Vagina (tissue), 2 donors: ENCODE measurements at regions of chr13 and their contacts with region 1.

Region 1: DNA sequence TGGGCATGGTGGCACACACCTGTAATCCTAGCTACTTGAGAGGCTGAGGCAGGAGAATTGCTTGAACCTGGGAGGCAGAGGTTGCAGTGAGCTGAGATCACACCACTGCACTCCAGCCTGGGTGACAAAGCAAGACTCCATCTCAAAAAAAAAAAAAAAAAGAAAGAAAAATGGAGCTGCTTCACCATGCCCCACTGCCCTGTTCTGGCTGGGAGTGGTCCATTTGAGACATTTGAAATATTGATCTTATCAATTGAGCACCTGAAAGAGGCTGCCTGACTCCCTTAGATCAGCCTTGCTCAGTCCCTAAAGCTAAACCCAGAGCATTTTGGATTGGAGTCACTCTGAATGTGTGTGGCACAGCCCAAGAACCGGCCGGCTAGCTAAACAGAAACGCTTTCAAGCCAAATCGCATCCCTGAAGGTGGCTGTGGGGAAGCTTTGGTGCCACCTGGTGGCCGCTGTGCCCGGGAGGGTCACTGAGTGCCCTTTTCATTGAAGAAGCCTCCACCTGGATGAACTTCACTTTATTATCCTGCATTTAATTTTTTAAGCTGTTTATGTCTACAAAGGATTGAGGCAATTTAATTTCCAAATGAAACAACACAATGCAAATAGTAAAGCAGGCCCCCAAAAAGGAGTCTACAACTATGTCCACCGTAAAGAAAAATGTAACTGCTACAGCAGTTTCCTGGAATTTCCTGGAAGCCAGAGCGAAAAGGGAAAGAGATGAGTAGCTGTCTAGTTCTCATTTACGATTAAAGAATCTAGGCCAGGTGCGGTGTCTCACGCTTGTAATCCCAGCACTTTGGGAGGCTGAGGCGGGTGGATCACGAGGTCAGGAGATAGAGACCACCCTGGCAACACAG is 53.1 kb upstream of the SERPINE3 start:
- DNase-seq: no peak
- H3K4me3 ChIP-seq: no peak overlapping the region
- H3K27ac ChIP-seq: no peak overlapping the region
- H3K4me1 ChIP-seq: no peaks in the 10 kb centered on the region
- H3K27me3 ChIP-seq: no peaks in the 10 kb centered on the region
- CTCF ChIP-seq: peak; percentile 50 to 77 (median 70)
- POLR2A ChIP-seq: no peak

Region 2: DNA sequence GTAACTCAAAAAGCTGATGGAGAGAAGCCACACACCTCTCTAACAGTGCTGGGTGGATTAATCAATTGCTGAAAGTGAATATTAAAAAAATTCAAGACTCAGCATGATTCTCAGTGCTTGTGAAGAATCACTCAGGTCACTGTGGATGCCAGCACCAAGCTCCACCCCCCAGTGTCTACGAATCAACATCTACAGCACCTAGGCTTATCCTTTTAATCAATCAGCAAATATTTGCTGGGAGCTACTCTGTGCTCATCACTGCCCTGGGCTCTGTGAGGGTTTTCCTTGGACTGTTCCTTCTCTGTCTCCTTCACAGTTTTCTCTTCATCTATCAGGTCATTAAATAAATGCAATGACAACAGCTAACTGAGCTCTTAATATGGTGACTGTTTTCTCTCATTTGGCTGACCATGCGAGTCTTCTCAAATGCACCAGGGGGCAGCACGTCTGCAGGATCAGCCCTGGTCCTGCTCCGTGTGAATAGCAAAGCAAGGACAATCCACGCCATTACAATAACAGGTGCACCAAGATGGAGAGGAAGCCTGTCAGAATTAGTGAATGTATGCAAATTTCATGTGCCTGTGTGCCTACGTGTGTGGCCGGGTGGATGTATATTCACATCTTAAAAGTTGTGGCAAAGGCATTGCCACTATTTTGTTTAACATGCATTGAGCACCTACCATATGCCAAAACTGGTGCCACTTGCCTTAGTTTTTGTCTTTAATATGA is 160.7 kb before region 1 on chr13:
- intact Hi-C with region 1: loop called (anchors 10 kb)
- DNase-seq: no peak
- H3K4me3 ChIP-seq: no peak overlapping the region
- H3K27ac ChIP-seq: no peak overlapping the region
- H3K4me1 ChIP-seq: no peaks in the 10 kb centered on the region
- H3K27me3 ChIP-seq: no peaks in the 10 kb centered on the region
- CTCF ChIP-seq: peak in 2 of 3 experiments; percentile 28 to 50
- POLR2A ChIP-seq: no peak

Region 3: GRCh38 chr13:51154029-51154555 is 132.3 kb before region 1 on chr13:
- intact Hi-C with region 1: loop called (anchors 5 kb)
- DNase-seq: no peak
- H3K4me3 ChIP-seq: no peak overlapping the region
- H3K27ac ChIP-seq: no peak overlapping the region
- H3K4me1 ChIP-seq: no peaks in the 10 kb centered on the region
- H3K27me3 ChIP-seq: no peaks in the 10 kb centered on the region
- CTCF ChIP-seq: no peak
- POLR2A ChIP-seq: no peak

Region 4: DNA sequence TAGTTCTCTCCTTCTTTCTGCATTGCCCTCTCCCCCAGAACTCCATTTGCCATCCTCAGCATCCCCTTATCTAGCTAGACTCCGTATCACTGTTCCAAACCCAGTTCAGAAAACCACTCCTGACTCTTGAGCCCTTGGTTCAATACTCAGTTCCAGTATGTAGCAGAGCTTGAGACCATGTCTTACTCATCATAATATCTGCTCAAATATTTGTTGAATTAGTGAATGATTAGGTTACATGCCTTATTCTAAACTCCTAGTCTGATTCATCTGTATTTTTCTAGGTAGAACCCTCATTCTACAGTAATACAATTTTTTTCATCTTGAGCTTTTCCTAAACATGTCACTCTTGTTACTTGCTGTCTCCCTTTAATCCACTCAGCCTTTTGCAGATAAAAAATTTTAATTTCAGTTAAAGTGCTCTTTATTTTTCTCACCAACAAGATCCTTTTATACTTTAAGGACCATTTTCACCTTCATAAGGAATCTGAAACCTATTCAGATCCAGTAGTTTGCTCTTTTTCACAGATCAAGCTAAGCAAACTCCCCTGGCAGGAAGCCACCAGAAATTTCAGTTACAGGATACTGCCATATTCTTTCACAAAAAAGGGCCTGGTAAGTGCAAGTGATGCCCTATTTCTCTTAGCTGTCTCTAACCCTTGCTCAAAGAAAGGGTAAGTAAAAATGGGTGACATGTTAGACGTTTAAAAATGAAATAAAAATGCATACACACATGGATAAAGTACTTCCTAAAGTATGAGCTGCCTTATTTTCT is 189.5 kb after region 1 on chr13:
- intact Hi-C with region 1: no loop called
- DNase-seq: no peak
- H3K4me3 ChIP-seq: no peak overlapping the region
- H3K27ac ChIP-seq: no peak overlapping the region
- H3K4me1 ChIP-seq: no peaks in the 10 kb centered on the region
- H3K27me3 ChIP-seq: no peaks in the 10 kb centered on the region
- CTCF ChIP-seq: no peak
- POLR2A ChIP-seq: no peak